ENCODE measurements at regions of chr7 and their contacts with region 1.

Region 1: DNA sequence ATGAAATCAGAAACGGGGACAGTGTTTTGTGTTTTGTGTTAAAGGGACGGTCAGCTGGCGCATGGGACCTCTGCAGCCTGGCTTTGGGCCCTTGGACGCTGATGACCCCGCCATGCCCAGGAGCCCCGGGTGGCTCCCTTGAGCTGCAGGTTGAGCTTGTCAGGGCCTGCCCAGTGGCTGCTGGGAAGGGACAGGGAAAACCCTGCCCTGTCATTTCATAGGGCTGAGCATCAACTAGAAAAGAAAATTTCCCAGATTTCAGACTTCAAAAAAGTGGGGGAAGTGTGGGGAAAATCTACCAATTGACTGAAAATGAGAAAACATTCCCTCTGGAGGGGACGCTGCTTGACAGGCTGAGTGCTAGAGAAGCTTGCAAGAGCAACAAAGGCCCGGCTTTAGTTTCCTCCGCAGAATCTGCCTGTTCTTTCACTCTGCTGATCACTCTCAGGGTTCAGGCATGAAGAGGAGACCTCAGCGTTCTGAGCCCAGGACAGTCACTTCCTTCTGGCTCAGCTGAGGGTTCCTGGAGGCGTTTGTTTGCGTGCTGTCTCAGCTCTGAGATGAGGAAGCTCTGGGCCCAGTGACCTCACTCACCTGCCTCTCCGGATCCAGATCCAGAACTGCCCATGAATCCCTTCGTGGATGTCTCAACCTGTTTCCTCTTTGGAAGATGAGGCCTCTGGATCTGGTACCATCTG is 18.6 kb upstream of the DNAJB6 start:
- DNase-seq: peak; percentile 70 to 90 (median 87)
- H3K4me3 ChIP-seq: peak overlapping the region in 3 of 7 experiments; percentile 26 to 45 (median 35)
- H3K27ac ChIP-seq: peak overlapping the region; percentile 80 to 86
- H3K4me1 ChIP-seq: peaks cover 3 to 40% (median 36%) of the 10 kb centered on the region in 4 experiments
- H3K27me3 ChIP-seq: no peaks in the 10 kb centered on the region

Region 2: GRCh38 chr7:157306846-157307838 is 11.0 kb before region 1 on chr7:
- CTCF ChIA-PET with region 1: interaction called, 38 read pairs
- POLR2A ChIA-PET with region 1: interaction called, 13 read pairs
- DNase-seq: no peak
- H3K4me3 ChIP-seq: no peak overlapping the region
- H3K27ac ChIP-seq: peak overlapping the region in 1 of 2 experiments; percentile 58
- H3K4me1 ChIP-seq: peaks cover 0 to 68% (median 35%) of the 10 kb centered on the region in 4 experiments
- H3K27me3 ChIP-seq: no peaks in the 10 kb centered on the region

Region 3: GRCh38 chr7:157444011-157444835 is 126.1 kb after region 1 on chr7:
- CTCF ChIA-PET with region 1: no interaction called
- POLR2A ChIA-PET with region 1: no interaction called
- DNase-seq: no peak
- H3K4me3 ChIP-seq: no peak overlapping the region
- H3K27ac ChIP-seq: no peak overlapping the region
- H3K4me1 ChIP-seq: no peaks in the 10 kb centered on the region
- H3K27me3 ChIP-seq: peaks cover 0 to 2% (median 0%) of the 10 kb centered on the region in 5 experiments

Measured in common myeloid progenitor, CD34-positive (primary cell).